ENCODE measurements at regions of chr10 and their contacts with region 1.

Region 1: DNA sequence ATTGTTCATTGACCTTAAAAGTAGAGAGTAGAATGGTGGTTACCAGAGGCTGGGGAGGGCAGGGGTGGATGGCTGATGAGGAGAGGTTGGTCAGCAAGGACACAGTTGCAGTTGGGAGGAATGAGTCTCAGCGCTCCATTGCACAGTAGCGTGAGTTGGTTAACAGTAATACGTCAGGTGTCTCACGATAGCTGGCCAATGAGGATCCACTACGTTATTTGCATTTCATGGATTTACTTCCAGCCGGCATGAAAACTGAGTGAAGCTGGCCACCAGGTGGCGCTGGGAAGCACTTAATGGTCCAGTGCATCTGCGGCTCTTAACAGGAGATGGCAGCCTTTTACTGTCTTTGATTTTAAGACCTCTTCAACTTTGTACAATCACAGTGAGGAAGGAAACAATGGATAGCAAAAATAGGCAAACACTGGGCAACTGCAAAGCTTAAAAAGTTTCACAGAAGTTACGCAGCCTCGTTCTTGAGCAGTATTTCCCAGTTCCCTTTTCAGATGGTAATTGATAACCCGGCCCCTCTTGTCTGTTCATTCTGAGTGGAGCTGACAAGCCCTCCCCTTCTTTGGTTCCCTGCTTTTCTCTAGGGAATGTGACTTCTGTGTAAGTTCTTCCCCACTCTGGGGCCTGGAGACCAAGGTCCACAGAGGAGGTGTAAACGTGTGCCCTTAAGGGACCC is 23.7 kb downstream of the AKR1E2 start:
- DNase-seq: peak; percentile 91
- ATAC-seq: peak; percentile 93
- H3K4me3 Mint-ChIP-seq: no peak overlapping the region
- H3K27ac Mint-ChIP-seq: no peak overlapping the region
- H3K4me1 Mint-ChIP-seq: peaks cover 6% of the 10 kb centered on the region
- H3K27me3 Mint-ChIP-seq: no peaks in the 10 kb centered on the region

Region 2: GRCh38 chr10:4721999-4722753 is 127.5 kb before region 1 on chr10:
- CTCF ChIA-PET with region 1: no interaction called
- POLR2A ChIA-PET with region 1: no interaction called
- DNase-seq: no peak
- ATAC-seq: no peak
- H3K4me3 Mint-ChIP-seq: no peak overlapping the region
- H3K27ac Mint-ChIP-seq: no peak overlapping the region
- H3K4me1 Mint-ChIP-seq: no peaks in the 10 kb centered on the region
- H3K27me3 Mint-ChIP-seq: peaks cover 15% of the 10 kb centered on the region

Region 3: DNA sequence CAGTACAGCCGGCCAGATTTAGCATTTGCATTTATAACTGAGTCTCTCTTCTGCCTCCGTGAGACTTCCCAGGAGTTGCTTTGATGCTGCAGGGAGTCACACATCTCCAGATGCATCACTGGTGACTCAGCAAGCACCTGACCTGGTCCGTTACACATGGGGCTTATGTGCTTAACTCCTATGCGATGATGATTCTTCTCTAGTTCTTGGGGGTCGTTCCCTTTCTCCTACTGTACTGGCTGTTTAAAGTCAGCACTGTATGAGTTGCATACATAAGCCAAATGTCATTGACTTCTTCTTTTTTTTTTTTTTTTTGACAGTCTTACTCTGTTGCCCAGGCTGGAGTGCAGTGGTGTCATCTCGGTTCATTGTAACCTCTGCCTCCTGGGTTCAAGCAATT is 36.7 kb before region 1 on chr10:
- CTCF ChIA-PET with region 1: interaction called, 47 read pairs
- POLR2A ChIA-PET with region 1: no interaction called
- DNase-seq: no peak
- ATAC-seq: no peak
- H3K4me3 Mint-ChIP-seq: no peak overlapping the region
- H3K27ac Mint-ChIP-seq: no peak overlapping the region
- H3K4me1 Mint-ChIP-seq: no peaks in the 10 kb centered on the region
- H3K27me3 Mint-ChIP-seq: peaks cover 8% of the 10 kb centered on the region

Region 4: DNA sequence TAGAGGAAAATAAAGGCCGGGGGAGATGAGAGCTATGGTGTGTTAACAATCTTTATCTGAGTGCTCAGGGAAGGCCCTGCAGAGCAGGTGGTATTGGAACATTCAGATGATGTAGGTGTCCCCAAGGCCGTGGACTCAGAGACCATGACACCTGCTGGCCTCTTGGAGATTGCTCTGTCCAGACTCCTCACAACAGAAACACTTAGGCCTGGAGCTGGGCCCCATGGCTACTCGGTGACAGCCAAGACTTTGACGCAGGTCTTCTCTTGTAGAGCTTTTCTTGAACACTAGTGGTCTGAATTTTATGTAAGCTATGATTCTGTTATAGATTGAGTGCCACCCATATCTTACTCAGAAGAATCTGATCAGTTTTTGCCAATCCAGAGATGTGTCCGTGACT is 10.3 kb before region 1 on chr10:
- CTCF ChIA-PET with region 1: interaction called, 61 read pairs
- POLR2A ChIA-PET with region 1: no interaction called
- DNase-seq: no peak
- ATAC-seq: no peak
- H3K4me3 Mint-ChIP-seq: no peak overlapping the region
- H3K27ac Mint-ChIP-seq: no peak overlapping the region
- H3K4me1 Mint-ChIP-seq: peaks cover 24% of the 10 kb centered on the region
- H3K27me3 Mint-ChIP-seq: no peaks in the 10 kb centered on the region

Region 5: DNA sequence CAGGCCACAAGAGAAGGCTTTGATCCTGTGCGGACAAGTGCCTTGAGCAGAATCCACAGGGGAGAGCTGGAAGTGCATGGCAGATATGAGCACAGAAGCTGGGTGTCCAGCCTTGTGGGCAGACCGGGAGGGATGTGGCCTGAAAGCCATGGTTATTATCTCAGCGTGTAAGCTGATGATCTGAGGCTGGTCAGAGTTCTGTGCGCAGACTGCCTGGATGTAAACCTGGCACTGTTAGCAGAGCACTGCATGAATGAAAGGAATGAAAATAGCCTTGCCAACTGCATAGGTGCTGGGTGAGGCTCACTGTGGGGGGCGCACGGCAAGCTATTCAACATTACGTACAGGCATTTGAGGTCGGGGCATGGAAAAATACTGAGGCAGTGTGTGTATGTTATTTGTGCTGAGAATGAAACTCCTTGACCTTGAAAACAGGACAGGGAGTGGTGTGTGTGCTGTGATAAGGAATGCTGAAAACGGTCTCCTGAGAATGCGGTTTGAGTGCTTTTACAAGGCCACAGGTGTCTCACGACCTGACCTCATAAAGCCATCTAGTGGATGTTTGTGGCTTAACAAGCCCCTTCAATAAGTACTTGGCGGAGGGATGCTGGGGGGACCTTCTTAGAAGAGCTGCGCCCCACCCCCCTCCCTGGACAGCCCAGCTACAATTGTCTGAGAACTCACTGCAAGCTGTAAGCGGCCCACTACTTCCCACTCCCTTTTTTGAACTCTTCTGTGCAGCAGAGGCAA is 132.2 kb after region 1 on chr10:
- CTCF ChIA-PET with region 1: interaction called, 20 read pairs
- POLR2A ChIA-PET with region 1: no interaction called
- DNase-seq: no peak
- ATAC-seq: no peak
- H3K4me3 Mint-ChIP-seq: no peak overlapping the region
- H3K27ac Mint-ChIP-seq: no peak overlapping the region
- H3K4me1 Mint-ChIP-seq: peaks cover 6% of the 10 kb centered on the region
- H3K27me3 Mint-ChIP-seq: no peaks in the 10 kb centered on the region

Region 6: GRCh38 chr10:5376450-5376849 is 526.8 kb after region 1 on chr10:
- CTCF ChIA-PET with region 1: interaction called, 17 read pairs
- POLR2A ChIA-PET with region 1: no interaction called
- DNase-seq: no peak
- ATAC-seq: no peak
- H3K4me3 Mint-ChIP-seq: no peak overlapping the region
- H3K27ac Mint-ChIP-seq: no peak overlapping the region
- H3K4me1 Mint-ChIP-seq: peaks cover 5% of the 10 kb centered on the region
- H3K27me3 Mint-ChIP-seq: peaks cover 5% of the 10 kb centered on the region

Region 7: GRCh38 chr10:5428133-5428532 is 578.4 kb after region 1 on chr10:
- CTCF ChIA-PET with region 1: interaction called, 82 read pairs
- POLR2A ChIA-PET with region 1: interaction called, 3 read pairs
- DNase-seq: no peak
- ATAC-seq: no peak
- H3K4me3 Mint-ChIP-seq: no peak overlapping the region
- H3K27ac Mint-ChIP-seq: no peak overlapping the region
- H3K4me1 Mint-ChIP-seq: no peaks in the 10 kb centered on the region
- H3K27me3 Mint-ChIP-seq: no peaks in the 10 kb centered on the region

Region 8: GRCh38 chr10:5446390-5446926 is 596.8 kb after region 1 on chr10:
- CTCF ChIA-PET with region 1: interaction called, 25 read pairs
- POLR2A ChIA-PET with region 1: no interaction called
- DNase-seq: peak; percentile 80
- ATAC-seq: peak; percentile 72
- H3K4me3 Mint-ChIP-seq: peak overlapping the region; percentile 68
- H3K27ac Mint-ChIP-seq: peak overlapping the region; percentile 62
- H3K4me1 Mint-ChIP-seq: peaks cover 55% of the 10 kb centered on the region
- H3K27me3 Mint-ChIP-seq: no peaks in the 10 kb centered on the region

Measured in activated CD8-positive, alpha-beta T cell treated with anti-CD3 and anti-CD28 coated beads, Interleukin-2, amount 10 ng/mL, durations not matched to agents 7 days and 5 days (primary cell).